ENCODE measurements at regions of chr1 and their contacts with region 1.

Region 1: DNA sequence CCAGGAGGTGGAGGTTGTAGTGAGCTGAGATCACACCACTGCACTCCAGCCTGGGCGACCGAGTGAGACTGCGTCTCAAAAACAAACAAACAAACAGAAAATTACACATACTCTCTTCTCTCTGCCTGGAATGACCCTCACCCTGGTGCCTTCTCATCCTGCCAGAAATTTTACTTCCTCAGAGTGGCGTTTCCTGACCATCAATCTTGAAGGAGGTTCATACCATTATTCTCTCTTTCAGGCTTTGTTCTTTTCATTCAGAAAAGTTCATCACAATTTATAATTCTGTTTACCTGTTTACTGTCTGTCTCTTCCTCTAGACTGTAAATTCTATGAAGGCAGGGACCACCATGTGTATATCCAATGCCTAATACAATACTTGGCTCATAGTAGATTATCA is 79.3 kb downstream of the RPS6KA1 start:
- DNase-seq: no peak
- ATAC-seq: no peak
- H3K4me3 ChIP-seq: no peak overlapping the region
- H3K4me3 Mint-ChIP-seq: no peak overlapping the region
- H3K27ac ChIP-seq: no peak overlapping the region
- H3K27ac Mint-ChIP-seq: no peak overlapping the region
- H3K4me1 ChIP-seq: no peaks in the 10 kb centered on the region
- H3K4me1 Mint-ChIP-seq: no peaks in the 10 kb centered on the region
- H3K27me3 ChIP-seq: peaks cover 0 to 7% of the 10 kb centered on the region in 2 experiments
- H3K27me3 Mint-ChIP-seq: no peaks in the 10 kb centered on the region

Region 2: GRCh38 chr1:27830621-27831424 is 1221.9 kb after region 1 on chr1 and contains the start of gene PPP1R8:
- CTCF ChIA-PET with region 1: interaction called in 1 of 2 experiments, 10 read pairs
- POLR2A ChIA-PET with region 1: no interaction called
- DNase-seq: peak; percentile 72 to 94 (median 86)
- ATAC-seq: peak; percentile 100
- H3K4me3 ChIP-seq: peak within 1 kb of the TSS; percentile 77 to 92
- H3K4me3 Mint-ChIP-seq: peak within 1 kb of the TSS; percentile 91 to 97 (median 93)
- H3K27ac ChIP-seq: peak within 1 kb of the TSS; percentile 71
- H3K27ac Mint-ChIP-seq: peak within 1 kb of the TSS; percentile 89 to 92
- H3K4me1 ChIP-seq: peaks cover 14 to 17% of the 10 kb centered on the region in 2 experiments
- H3K4me1 Mint-ChIP-seq: peaks cover 12 to 45% (median 43%) of the 10 kb centered on the region in 3 donors
- H3K27me3 ChIP-seq: no peaks in the 10 kb centered on the region
- H3K27me3 Mint-ChIP-seq: no peaks in the 10 kb centered on the region
- total RNA-seq, gene PPP1R8: 20.5 to 48.1 (median 40.5) TPM

Region 3: DNA sequence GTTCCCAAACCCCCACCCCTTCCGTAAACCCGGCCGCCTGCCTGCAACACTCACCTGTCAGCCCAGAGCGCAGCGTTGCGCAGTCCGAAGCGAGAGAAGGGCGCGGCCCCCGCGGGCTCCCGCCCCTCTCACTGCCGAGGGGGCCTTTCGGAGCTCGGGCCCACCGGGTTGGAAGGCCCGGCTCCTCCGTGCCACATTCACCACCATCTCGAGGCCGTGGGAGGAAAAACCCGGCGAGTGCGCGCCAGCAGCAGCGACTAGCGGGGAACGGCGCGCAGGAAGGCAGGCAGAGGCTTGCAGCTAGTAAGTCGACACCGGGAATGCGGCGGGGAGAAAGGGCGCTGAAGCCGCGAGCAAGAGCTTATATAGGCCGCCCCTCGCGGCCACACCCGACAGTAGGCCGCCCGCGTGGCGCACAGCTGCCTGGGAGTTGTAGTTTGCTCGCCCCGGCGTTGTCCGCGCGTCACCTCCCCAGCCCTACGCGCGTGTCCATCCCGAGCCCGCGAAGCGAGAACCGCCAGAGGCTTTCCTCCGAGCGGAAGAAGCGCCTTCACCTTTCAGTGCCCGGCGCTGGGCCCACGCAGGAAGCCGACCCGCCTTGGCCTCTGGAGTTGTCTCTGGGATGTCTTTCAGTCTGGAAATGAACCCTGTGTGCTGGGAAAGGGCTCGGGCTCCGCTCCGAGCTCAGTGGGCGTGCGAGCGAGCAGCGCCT is 1972.8 kb after region 1 on chr1:
- CTCF ChIA-PET with region 1: no interaction called
- POLR2A ChIA-PET with region 1: no interaction called
- DNase-seq: peak; percentile 74 to 95 (median 84)
- ATAC-seq: peak; percentile 87 to 92 (median 90)
- H3K4me3 ChIP-seq: peak overlapping the region; percentile 91 to 95
- H3K4me3 Mint-ChIP-seq: peak overlapping the region; percentile 89 to 97 (median 92)
- H3K27ac ChIP-seq: peak overlapping the region; percentile 70
- H3K27ac Mint-ChIP-seq: peak overlapping the region; percentile 92 to 93
- H3K4me1 ChIP-seq: peaks cover 11 to 39% of the 10 kb centered on the region in 2 experiments
- H3K4me1 Mint-ChIP-seq: peaks cover 36 to 52% (median 38%) of the 10 kb centered on the region in 3 donors
- H3K27me3 ChIP-seq: no peaks in the 10 kb centered on the region
- H3K27me3 Mint-ChIP-seq: no peaks in the 10 kb centered on the region